Naive thymus-derived CD4-positive, alpha-beta T cell (primary cell): ENCODE measurements at regions of chr11 and their contacts with region 1.

Region 1: GRCh38 chr11:88543902-88544655 is 206.5 kb upstream of the CTSC start:
- DNase-seq: peak; percentile 47 to 82 (median 75)
- ATAC-seq: peak; percentile 98
- H3K4me3 ChIP-seq: no peak overlapping the region
- H3K4me3 Mint-ChIP-seq: peak overlapping the region in 3 of 10 donors; percentile 11 to 51 (median 27)
- H3K27ac ChIP-seq: no peak overlapping the region
- H3K27ac Mint-ChIP-seq: peak overlapping the region in 3 of 9 donors; percentile 26 to 50 (median 40)
- H3K4me1 ChIP-seq: peaks cover 0 to 4% of the 10 kb centered on the region in 2 donors
- H3K4me1 Mint-ChIP-seq: peaks cover 4 to 10% (median 6%) of the 10 kb centered on the region in 7 donors
- H3K27me3 ChIP-seq: no peaks in the 10 kb centered on the region
- H3K27me3 Mint-ChIP-seq: peaks cover 0 to 6% (median 0%) of the 10 kb centered on the region in 5 donors

Region 2: DNA sequence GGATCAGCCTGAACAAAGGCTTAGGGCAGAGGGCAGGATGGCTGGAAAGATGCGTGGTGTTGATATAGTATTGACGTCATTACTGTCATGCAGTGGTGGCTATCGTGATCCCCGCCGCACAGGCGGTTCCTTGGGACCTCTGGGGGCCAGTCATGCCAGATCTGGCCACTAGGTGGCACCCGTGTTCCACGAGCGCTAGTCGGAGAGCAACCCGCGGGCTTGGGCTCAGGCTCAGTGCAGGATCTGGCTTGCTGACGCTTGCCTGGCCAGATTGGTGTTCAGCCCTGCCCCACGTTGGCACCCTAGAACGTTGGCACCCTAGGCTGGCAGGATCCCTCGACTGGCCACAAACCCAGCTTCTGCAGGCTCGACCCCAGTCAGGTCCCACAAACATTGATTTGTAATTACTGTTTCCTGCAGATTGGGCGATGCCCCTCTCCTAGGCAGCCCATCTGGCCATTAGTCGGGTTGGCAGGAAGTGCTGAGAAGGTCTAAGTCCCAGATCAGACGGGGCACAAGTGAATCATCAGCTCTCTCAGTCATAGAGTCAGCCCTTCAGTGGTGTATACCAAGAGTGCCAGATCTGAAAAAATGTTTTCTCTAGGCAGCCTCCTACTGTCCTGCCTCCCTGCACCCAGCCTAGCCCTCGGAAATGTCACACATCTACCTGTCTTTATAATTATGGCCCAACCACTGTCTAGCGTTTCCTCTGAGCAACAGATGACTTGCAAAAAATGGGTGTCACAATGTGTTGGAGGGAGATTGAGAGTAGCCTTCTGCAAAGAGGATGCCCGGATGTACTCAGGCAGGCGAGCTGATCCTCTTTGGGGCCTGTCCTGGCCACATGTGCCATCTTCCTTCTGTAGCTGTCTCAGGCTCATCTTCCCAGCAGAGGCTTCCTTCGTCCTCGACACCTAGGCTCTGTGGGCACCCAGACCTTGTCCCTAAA is 1191.0 kb before region 1 on chr11:
- CTCF ChIA-PET with region 1: interaction called, 4 read pairs
- POLR2A ChIA-PET with region 1: no interaction called
- intact Hi-C with region 1: loop called (anchors 1 to 2 kb)
- DNase-seq: peak; percentile 58 to 87 (median 74)
- ATAC-seq: peak; percentile 93
- H3K4me3 ChIP-seq: no peak overlapping the region
- H3K4me3 Mint-ChIP-seq: peak overlapping the region in 3 of 10 donors; percentile 12 to 26 (median 21)
- H3K27ac ChIP-seq: no peak overlapping the region
- H3K27ac Mint-ChIP-seq: peak overlapping the region in 1 of 9 donors; percentile 52
- H3K4me1 ChIP-seq: peaks cover 0 to 6% of the 10 kb centered on the region in 2 donors
- H3K4me1 Mint-ChIP-seq: peaks cover 0 to 13% (median 10%) of the 10 kb centered on the region in 7 donors
- H3K27me3 ChIP-seq: peaks cover 0 to 5% of the 10 kb centered on the region in 2 donors
- H3K27me3 Mint-ChIP-seq: peaks cover 5 to 15% (median 9%) of the 10 kb centered on the region in 5 donors

Region 3: GRCh38 chr11:87878373-87878779 is 665.7 kb before region 1 on chr11:
- CTCF ChIA-PET with region 1: no interaction called
- POLR2A ChIA-PET with region 1: no interaction called
- intact Hi-C with region 1: loop called in 1 of 2 experiments (anchors 1 kb)
- DNase-seq: no peak
- ATAC-seq: no peak
- H3K4me3 ChIP-seq: no peak overlapping the region
- H3K4me3 Mint-ChIP-seq: no peak overlapping the region
- H3K27ac ChIP-seq: no peak overlapping the region
- H3K27ac Mint-ChIP-seq: no peak overlapping the region
- H3K4me1 ChIP-seq: no peaks in the 10 kb centered on the region
- H3K4me1 Mint-ChIP-seq: no peaks in the 10 kb centered on the region
- H3K27me3 ChIP-seq: no peaks in the 10 kb centered on the region
- H3K27me3 Mint-ChIP-seq: peaks cover 0 to 12% (median 8%) of the 10 kb centered on the region in 5 donors

Region 4: DNA sequence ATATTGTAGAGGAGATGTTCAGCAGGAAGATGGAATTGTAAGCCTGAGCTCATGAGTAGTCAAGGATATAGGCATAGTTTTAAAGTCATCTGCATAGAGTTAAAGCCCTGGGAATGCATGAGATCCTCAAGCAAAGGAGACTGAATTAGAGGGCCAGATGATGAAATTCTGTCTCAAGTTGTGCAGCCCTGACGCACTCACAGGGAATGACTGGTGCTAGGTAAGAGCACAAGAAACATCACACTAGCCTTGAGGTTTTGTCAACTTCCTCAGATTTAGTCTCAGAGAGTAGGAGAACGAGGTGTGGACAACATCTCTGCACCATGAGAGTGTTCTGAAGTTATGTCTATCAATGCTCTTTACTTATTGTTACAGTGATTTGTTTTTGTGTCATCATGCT is 374.6 kb before region 1 on chr11:
- CTCF ChIA-PET with region 1: no interaction called
- POLR2A ChIA-PET with region 1: no interaction called
- intact Hi-C with region 1: loop called in 1 of 2 experiments (anchors 1 kb)
- DNase-seq: no peak
- ATAC-seq: no peak
- H3K4me3 ChIP-seq: no peak overlapping the region
- H3K4me3 Mint-ChIP-seq: no peak overlapping the region
- H3K27ac ChIP-seq: no peak overlapping the region
- H3K27ac Mint-ChIP-seq: no peak overlapping the region
- H3K4me1 ChIP-seq: no peaks in the 10 kb centered on the region
- H3K4me1 Mint-ChIP-seq: peaks cover 0 to 8% (median 4%) of the 10 kb centered on the region in 7 donors
- H3K27me3 ChIP-seq: no peaks in the 10 kb centered on the region
- H3K27me3 Mint-ChIP-seq: peaks cover 0 to 9% (median 4%) of the 10 kb centered on the region in 5 donors

Region 5: DNA sequence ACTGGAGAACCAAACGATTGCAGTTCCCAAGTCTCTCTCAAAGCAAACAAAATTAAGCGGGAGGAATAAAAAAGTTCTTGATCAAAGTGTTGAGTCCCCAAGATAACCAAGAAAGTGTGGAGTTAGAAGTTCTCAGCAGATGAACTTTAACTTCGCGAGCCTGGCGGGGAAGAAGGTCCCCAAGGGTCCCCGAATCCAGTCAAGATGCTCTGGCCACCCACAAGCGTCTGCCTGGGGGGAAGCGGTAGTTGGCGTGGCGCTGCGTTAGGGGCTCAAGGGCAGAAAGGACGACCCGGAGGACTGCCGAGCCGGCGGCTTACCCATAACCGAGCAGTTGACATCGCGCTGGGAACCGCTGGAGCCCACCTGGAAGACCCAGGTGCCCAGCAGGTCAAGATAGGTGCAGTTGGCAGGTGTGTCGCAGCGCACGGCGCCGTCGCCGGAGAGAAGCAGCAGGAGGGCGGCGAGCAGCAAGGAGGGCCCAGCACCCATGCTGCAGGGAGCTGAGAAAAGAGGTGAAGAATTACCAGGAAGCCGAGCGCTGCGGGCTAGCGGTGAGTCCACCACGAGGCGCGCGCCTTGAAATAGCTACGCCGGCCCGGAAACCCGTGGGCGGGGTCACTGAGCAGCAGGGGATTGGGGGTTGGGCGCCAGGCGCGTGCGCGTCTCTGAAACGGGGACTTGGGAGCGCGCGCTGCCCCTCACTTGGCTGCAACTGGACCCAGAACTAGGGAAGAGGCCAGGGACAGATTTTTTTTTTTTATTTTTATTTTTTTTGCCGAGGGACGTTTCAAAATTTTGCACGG is 206.7 kb before region 1 on chr11 and contains the start of gene CTSC:
- CTCF ChIA-PET with region 1: no interaction called
- POLR2A ChIA-PET with region 1: no interaction called
- intact Hi-C with region 1: loop called in 1 of 2 experiments (anchors 2 kb)
- DNase-seq: peak; percentile 79 to 93 (median 86)
- ATAC-seq: peak; percentile 94
- H3K4me3 ChIP-seq: peak within 1 kb of the TSS; percentile 97
- H3K4me3 Mint-ChIP-seq: peak within 1 kb of the TSS; percentile 88 to 100 (median 99)
- H3K27ac ChIP-seq: peak within 1 kb of the TSS; percentile 70
- H3K27ac Mint-ChIP-seq: peak within 1 kb of the TSS; percentile 88 to 99 (median 96)
- H3K4me1 ChIP-seq: peaks cover 0 to 36% of the 10 kb centered on the region in 2 donors
- H3K4me1 Mint-ChIP-seq: peaks cover 30 to 76% (median 63%) of the 10 kb centered on the region in 7 donors
- H3K27me3 ChIP-seq: no peaks in the 10 kb centered on the region
- H3K27me3 Mint-ChIP-seq: no peaks in the 10 kb centered on the region
- total RNA-seq, gene CTSC: 26.9 to 174 (median 45.2) TPM

Region 6: DNA sequence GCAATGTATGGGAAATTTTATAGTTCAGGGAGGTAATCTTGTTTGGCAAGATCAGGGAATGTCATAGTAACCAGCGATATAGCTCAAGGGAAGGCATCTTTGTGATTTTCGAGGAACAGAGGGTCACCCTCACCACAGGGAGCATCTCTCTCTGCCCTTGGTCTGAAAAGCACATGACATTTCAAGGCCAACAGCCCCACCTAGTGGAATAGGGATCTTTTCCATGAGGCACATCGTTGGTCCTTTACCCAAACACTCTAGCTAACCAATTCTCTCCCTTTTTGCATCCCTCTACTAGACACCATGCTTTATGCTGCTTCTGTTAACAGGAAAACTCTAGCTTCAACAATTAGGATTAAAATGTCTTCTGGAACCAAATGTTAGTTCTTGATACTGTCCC is 342.7 kb after region 1 on chr11:
- CTCF ChIA-PET with region 1: no interaction called
- POLR2A ChIA-PET with region 1: no interaction called
- intact Hi-C with region 1: loop called in 1 of 2 experiments (anchors 2 kb)
- DNase-seq: peak in 4 of 9 donors; percentile 11 to 34 (median 19)
- ATAC-seq: no peak
- H3K4me3 ChIP-seq: no peak overlapping the region
- H3K4me3 Mint-ChIP-seq: no peak overlapping the region
- H3K27ac ChIP-seq: no peak overlapping the region
- H3K27ac Mint-ChIP-seq: peak overlapping the region in 3 of 9 donors; percentile 9 to 19 (median 14)
- H3K4me1 ChIP-seq: no peaks in the 10 kb centered on the region
- H3K4me1 Mint-ChIP-seq: peaks cover 0 to 1% (median 0%) of the 10 kb centered on the region in 7 donors
- H3K27me3 ChIP-seq: no peaks in the 10 kb centered on the region
- H3K27me3 Mint-ChIP-seq: no peaks in the 10 kb centered on the region